GM12878 (cell line): ENCODE measurements at regions of chr17 and their contacts with region 1.

Region 1: DNA sequence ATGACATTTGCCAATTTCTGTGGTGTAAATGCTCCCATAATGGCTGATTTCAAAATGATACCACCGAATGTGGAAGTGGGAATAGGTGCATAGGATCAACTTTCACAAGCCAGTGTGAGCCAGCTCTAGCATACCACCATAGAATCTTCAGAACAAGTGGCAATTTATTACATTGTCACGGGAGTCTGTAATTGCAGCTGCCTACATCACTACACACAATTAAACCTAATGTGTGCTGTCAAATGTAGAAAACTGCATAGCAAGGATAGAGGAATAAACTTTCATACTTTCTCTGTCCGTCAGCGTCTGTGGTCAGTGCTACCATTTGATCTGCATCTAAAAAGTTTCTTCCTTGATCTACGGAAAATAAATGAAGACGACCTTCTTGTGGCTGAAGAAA is 417.8 kb upstream of the TOM1L1 start:
- DNase-seq: no peak
- ATAC-seq: no peak
- H3K4me3 ChIP-seq: no peak overlapping the region
- H3K27ac ChIP-seq: no peak overlapping the region
- H3K4me1 ChIP-seq: no peaks in the 10 kb centered on the region
- H3K27me3 ChIP-seq: no peaks in the 10 kb centered on the region
- CTCF ChIP-seq: no peak
- EP300 ChIP-seq: no peak
- POLR2A ChIP-seq: no peak
- RAD21 ChIP-seq: no peak

Region 2: GRCh38 chr17:54435966-54436365 is 46.9 kb before region 1 on chr17:
- CTCF ChIA-PET with region 1: no interaction called
- POLR2A ChIA-PET with region 1: no interaction called
- RAD21 ChIA-PET with region 1: no interaction called
- SMC1A ChIA-PET with region 1: interaction called, 11 read pairs
- in situ Hi-C with region 1: no loop called
- intact Hi-C with region 1: no loop called
- DNase-seq: no peak
- ATAC-seq: no peak
- H3K4me3 ChIP-seq: no peak overlapping the region
- H3K27ac ChIP-seq: no peak overlapping the region
- H3K4me1 ChIP-seq: no peaks in the 10 kb centered on the region
- H3K27me3 ChIP-seq: no peaks in the 10 kb centered on the region
- CTCF ChIP-seq: no peak
- EP300 ChIP-seq: no peak
- POLR2A ChIP-seq: no peak
- RAD21 ChIP-seq: no peak

Region 3: GRCh38 chr17:54455251-54455868 is 27.5 kb before region 1 on chr17:
- CTCF ChIA-PET with region 1: interaction called, 3 read pairs
- POLR2A ChIA-PET with region 1: no interaction called
- RAD21 ChIA-PET with region 1: no interaction called
- SMC1A ChIA-PET with region 1: interaction called, 11 read pairs
- in situ Hi-C with region 1: no loop called
- intact Hi-C with region 1: no loop called
- DNase-seq: no peak
- ATAC-seq: no peak
- H3K4me3 ChIP-seq: no peak overlapping the region
- H3K27ac ChIP-seq: no peak overlapping the region
- H3K4me1 ChIP-seq: no peaks in the 10 kb centered on the region
- H3K27me3 ChIP-seq: no peaks in the 10 kb centered on the region
- CTCF ChIP-seq: no peak
- EP300 ChIP-seq: no peak
- POLR2A ChIP-seq: no peak
- RAD21 ChIP-seq: no peak

Region 4: GRCh38 chr17:54536306-54536705 is 53.5 kb after region 1 on chr17:
- CTCF ChIA-PET with region 1: no interaction called
- POLR2A ChIA-PET with region 1: no interaction called
- RAD21 ChIA-PET with region 1: no interaction called
- SMC1A ChIA-PET with region 1: no interaction called
- in situ Hi-C with region 1: no loop called
- intact Hi-C with region 1: no loop called
- DNase-seq: no peak
- ATAC-seq: no peak
- H3K4me3 ChIP-seq: no peak overlapping the region
- H3K27ac ChIP-seq: no peak overlapping the region
- H3K4me1 ChIP-seq: no peaks in the 10 kb centered on the region
- H3K27me3 ChIP-seq: no peaks in the 10 kb centered on the region
- CTCF ChIP-seq: no peak
- EP300 ChIP-seq: no peak
- POLR2A ChIP-seq: no peak
- RAD21 ChIP-seq: no peak